ENCODE measurements at regions of chr21 and their contacts with region 1.

Region 1: GRCh38 chr21:44480200-44481053 is 25.1 kb downstream of the LRRC3 start:
- DNase-seq: no peak
- ATAC-seq: no peak
- H3K4me3 ChIP-seq: no peak overlapping the region
- H3K27ac ChIP-seq: no peak overlapping the region
- H3K4me1 ChIP-seq: no peaks in the 10 kb centered on the region
- CTCF ChIP-seq: no peak
- EP300 ChIP-seq: no peak
- POLR2A ChIP-seq: no peak
- RAD21 ChIP-seq: no peak

Region 2: DNA sequence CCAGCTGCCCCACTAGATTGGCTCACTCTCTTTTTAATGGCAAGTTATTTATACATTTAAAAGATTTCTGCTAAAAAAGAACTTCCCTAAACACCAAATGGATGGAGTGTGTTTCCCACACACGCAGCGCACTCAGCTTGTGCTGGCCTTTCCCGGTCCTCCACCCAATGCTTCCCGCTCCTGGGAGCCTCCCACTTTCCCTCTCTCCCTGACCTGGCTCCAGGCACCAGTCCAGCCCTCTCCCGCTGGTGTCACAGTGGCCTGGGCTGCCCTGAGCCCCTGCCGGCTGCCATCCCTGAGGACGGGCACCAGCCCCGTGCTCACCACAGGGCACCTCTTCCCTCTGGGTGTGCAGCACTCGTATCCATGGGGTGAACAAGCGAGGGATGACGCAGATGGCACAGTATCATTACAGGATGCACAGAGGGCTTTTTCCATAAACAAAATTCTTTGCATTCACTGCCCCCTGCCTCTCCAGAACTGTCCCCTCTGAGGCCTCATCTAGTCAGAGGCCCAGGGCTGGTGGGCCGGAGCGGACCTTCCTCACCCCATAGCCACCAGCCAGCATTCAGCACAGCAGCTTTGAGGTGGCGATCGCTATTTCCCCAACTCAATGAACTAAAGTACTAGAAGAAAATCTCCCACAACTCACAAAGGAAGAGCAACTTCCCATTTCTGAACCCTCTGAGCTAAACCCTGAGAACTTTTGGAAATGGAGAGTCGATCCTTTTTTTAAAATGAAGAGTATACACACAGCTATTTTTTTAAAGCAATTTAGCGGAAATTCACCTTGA is 1898.2 kb before region 1 on chr21:
- CTCF ChIA-PET with region 1: no interaction called
- POLR2A ChIA-PET with region 1: no interaction called
- DNase-seq: no peak
- ATAC-seq: no peak
- H3K4me3 ChIP-seq: no peak overlapping the region
- H3K27ac ChIP-seq: no peak overlapping the region
- H3K4me1 ChIP-seq: no peaks in the 10 kb centered on the region
- CTCF ChIP-seq: no peak
- EP300 ChIP-seq: no peak
- POLR2A ChIP-seq: no peak
- RAD21 ChIP-seq: no peak

Region 3: GRCh38 chr21:44492567-44493385 is 12.3 kb after region 1 on chr21:
- CTCF ChIA-PET with region 1: interaction called, 12 read pairs
- POLR2A ChIA-PET with region 1: no interaction called
- DNase-seq: no peak
- ATAC-seq: no peak
- H3K4me3 ChIP-seq: no peak overlapping the region
- H3K27ac ChIP-seq: no peak overlapping the region
- H3K4me1 ChIP-seq: no peaks in the 10 kb centered on the region
- CTCF ChIP-seq: no peak
- EP300 ChIP-seq: no peak
- POLR2A ChIP-seq: no peak
- RAD21 ChIP-seq: no peak